ENCODE measurements at regions of chr13 and their contacts with region 1.

Region 1: GRCh38 chr13:67416047-67416925 is 186.2 kb upstream of the PCDH9 start:
- DNase-seq: peak; percentile 79
- ATAC-seq: peak; percentile 100
- H3K4me3 Mint-ChIP-seq: no peak overlapping the region
- H3K27ac Mint-ChIP-seq: no peak overlapping the region
- H3K4me1 Mint-ChIP-seq: no peaks in the 10 kb centered on the region
- H3K27me3 Mint-ChIP-seq: peaks cover 4% of the 10 kb centered on the region; the same call in 1 of the 2 replicates
- CTCF ChIP-seq: peak; percentile 64

Region 2: DNA sequence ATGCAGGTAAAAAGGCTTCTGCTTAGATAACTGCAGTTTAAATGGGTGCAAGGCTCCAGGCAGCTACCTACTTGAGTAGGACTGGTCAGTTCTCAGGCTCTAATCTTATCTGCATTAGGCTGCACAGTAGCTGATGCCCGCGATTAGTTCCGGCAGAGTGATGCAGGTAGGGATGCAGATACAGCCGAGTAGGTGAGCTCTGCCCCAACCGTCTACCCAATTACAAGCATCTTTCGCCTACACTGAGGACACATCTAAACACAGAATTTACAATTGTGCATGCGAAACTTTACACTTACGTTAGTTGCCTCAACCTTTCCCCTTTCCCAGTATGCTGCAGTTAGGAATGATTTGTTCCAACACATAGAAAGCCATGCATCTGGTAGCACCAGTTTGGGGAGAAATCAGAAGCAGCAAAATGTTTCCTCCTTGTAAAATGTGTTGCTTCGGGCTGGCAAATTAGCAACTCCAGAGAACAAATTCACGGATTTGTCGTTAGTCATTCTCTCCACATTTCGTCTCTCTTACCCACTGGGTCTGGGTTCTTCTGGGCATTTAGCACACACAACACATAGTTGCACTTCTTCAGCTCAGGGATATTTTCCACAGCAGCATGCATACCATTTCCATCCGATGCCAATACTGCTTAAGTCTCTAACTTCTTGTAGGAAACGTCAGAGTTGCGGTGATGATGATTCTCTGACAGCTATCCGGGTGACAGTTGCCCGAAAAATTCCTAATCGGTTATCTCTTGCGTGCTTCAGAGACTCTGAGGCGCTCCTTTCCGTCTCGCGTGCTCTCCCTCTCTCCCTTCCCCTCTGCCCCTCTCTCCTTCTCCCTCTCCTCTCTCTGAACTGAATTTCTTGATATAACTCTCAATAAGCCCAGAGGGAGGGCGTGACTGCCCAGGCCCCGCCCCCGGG is 186.5 kb before region 1 on chr13 and contains the start of gene PCDH9:
- CTCF ChIA-PET with region 1: interaction called, 15 read pairs
- POLR2A ChIA-PET with region 1: no interaction called
- DNase-seq: no peak
- ATAC-seq: no peak
- H3K4me3 Mint-ChIP-seq: no peak within 1 kb of the TSS
- H3K27ac Mint-ChIP-seq: peak within 1 kb of the TSS; percentile 46; the same call in 1 of the 2 replicates
- H3K4me1 Mint-ChIP-seq: peaks cover 10% of the 10 kb centered on the region
- H3K27me3 Mint-ChIP-seq: no peaks in the 10 kb centered on the region; the same call in 1 of the 2 replicates
- CTCF ChIP-seq: no peak
- total RNA-seq, gene PCDH9: 0.25 to 0.48 TPM (median 0.34 TPM) in 3 replicates

Region 3: GRCh38 chr13:67258482-67258881 is 157.8 kb before region 1 on chr13:
- CTCF ChIA-PET with region 1: interaction called, 18 read pairs
- POLR2A ChIA-PET with region 1: no interaction called
- DNase-seq: no peak
- ATAC-seq: peak; percentile 93
- H3K4me3 Mint-ChIP-seq: no peak overlapping the region
- H3K27ac Mint-ChIP-seq: peak overlapping the region; percentile 53; the same call in 1 of the 2 replicates
- H3K4me1 Mint-ChIP-seq: peaks cover 32% of the 10 kb centered on the region
- H3K27me3 Mint-ChIP-seq: peaks cover 8% of the 10 kb centered on the region
- CTCF ChIP-seq: no peak

Region 4: DNA sequence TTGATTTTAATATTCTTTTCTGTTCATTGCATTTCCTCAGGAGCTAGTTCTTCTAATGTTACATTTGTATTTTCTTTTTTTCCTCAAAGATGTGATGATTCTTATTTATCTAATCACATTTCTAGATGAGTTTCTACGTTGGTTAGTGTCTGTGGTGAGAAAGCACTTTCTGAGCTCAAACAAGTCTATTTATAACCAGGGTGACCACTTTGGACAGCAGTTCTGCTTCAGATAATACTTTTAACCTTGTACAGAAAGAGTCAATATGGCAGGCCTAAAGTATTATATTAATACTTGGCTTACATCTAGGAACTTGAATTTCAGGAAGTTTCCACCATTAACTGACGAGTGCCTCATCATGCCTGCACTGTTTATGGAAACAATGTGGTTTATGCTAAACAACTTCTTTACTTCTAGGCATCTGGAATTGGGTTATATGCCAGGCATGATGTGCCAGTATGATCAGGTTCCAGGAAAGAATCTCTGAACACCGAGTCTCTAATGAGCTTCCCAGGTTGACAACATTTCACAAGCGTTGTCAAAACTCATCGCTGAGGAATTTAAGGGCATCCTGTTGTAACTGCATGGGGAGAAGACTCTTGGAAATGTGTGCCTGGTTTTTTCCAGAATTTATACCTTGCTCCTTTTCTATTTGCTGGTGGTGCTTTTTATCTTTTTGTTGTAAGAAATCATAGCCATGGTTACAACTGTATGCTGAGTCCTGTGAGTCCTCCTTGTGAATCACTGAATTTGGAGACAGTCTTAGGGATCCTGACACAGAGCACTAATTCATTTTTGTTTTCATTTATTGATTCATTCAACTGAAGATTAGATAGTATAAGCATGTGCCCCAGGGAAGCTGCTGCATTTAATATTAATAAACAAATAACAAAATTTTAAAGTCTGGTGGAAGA is 158.3 kb after region 1 on chr13:
- CTCF ChIA-PET with region 1: no interaction called
- POLR2A ChIA-PET with region 1: no interaction called
- DNase-seq: no peak
- ATAC-seq: no peak
- H3K4me3 Mint-ChIP-seq: no peak overlapping the region
- H3K27ac Mint-ChIP-seq: no peak overlapping the region
- H3K4me1 Mint-ChIP-seq: no peaks in the 10 kb centered on the region
- H3K27me3 Mint-ChIP-seq: no peaks in the 10 kb centered on the region
- CTCF ChIP-seq: no peak

Measured in WTC11 (cell line).